ENCODE measurements at regions of chr6 and their contacts with region 1.

Region 1: DNA sequence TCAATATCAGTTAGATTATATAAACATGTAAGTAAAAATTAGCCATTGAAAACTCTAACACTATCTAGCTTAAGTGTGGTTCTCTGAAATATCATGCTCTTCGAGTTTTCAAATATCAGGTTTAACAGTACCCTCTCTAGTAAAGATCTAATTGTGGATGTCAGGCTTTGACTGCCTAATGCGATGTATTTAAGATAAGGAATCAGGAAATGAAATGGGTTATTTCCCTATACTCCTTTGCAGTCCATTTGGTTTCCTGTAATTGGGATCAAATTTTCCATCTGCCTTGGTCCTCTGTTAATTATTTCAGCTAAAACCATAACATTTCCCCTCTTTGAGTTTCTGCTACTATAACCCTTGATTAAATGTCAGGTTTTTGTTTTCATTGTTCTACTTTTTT is 361.3 kb upstream of the MMS22L start:
- DNase-seq: no peak
- ATAC-seq: no peak

Region 2: GRCh38 chr6:97629180-97629579 is 15.2 kb before region 1 on chr6:
- intact Hi-C with region 1: loop called in 1 of 2 experiments (anchors 2 kb)
- DNase-seq: no peak
- ATAC-seq: no peak